ENCODE measurements at regions of chr6 and their contacts with region 1.

Region 1: GRCh38 chr6:83221889-83222479 is 28.8 kb downstream of the RWDD2A start:
- DNase-seq: no peak
- ATAC-seq: no peak

Region 2: DNA sequence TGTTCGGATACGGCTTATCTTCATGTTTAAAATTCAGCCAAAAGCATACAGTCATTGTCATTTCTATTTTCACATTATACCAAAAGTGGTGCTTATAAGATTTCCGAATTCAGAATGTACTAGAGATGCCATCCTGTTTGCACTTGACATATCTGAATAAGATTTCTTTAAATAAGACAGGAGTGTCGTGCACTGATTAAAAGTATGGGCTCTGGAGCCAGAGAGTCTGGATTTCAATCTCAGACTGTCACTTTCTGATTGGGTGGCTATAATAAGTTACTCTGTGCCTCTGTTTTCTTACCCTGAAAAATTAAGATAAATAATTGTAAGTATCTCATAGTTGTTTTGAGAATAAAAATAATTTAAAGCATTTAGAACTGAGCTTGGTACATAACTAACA is 63.9 kb after region 1 on chr6:
- intact Hi-C with region 1: no loop called
- DNase-seq: no peak
- ATAC-seq: no peak

Region 3: GRCh38 chr6:83514866-83515466 is 293.0 kb after region 1 on chr6:
- intact Hi-C with region 1: loop called (anchors 5 to 10 kb)
- DNase-seq: no peak
- ATAC-seq: peak; percentile 55

Measured in left colon (tissue), 2 donors.